ENCODE measurements at regions of chr17 and their contacts with region 1.

Region 1: GRCh38 chr17:76408052-76408849 is 23.8 kb downstream of the SPHK1 start:
- DNase-seq: peak; percentile 85
- H3K4me3 Mint-ChIP-seq: no peak overlapping the region
- H3K27ac Mint-ChIP-seq: no peak overlapping the region
- H3K4me1 Mint-ChIP-seq: peaks cover 6% of the 10 kb centered on the region
- H3K27me3 Mint-ChIP-seq: no peaks in the 10 kb centered on the region

Region 2: DNA sequence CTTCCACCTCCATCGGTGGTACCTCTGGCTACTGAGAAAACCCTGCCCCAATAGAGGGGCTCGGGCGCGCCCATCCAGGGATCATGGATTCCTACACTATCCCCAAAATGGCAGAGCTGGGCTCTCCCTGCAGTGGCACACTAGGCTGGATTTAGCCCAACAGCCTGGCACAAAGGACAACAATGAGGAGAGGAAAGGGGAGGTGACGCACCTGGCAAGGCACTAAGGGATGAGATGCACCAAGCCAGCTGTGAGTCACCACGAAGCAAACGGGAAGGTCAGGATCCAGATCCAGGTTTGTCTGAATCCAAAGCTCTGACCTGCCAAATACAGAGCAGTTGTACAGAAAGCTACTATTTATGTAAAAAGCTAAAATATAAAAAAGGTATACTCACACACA is 26.6 kb after region 1 on chr17:
- CTCF ChIA-PET with region 1: interaction called, 10 read pairs
- DNase-seq: no peak
- H3K4me3 Mint-ChIP-seq: no peak overlapping the region
- H3K27ac Mint-ChIP-seq: no peak overlapping the region
- H3K4me1 Mint-ChIP-seq: peaks cover 4% of the 10 kb centered on the region
- H3K27me3 Mint-ChIP-seq: no peaks in the 10 kb centered on the region

Region 3: GRCh38 chr17:76458580-76459490 is 50.6 kb after region 1 on chr17:
- CTCF ChIA-PET with region 1: interaction called, 14 read pairs
- DNase-seq: no peak
- H3K4me3 Mint-ChIP-seq: no peak overlapping the region
- H3K27ac Mint-ChIP-seq: no peak overlapping the region
- H3K4me1 Mint-ChIP-seq: no peaks in the 10 kb centered on the region
- H3K27me3 Mint-ChIP-seq: peaks cover 55% of the 10 kb centered on the region

Region 4: DNA sequence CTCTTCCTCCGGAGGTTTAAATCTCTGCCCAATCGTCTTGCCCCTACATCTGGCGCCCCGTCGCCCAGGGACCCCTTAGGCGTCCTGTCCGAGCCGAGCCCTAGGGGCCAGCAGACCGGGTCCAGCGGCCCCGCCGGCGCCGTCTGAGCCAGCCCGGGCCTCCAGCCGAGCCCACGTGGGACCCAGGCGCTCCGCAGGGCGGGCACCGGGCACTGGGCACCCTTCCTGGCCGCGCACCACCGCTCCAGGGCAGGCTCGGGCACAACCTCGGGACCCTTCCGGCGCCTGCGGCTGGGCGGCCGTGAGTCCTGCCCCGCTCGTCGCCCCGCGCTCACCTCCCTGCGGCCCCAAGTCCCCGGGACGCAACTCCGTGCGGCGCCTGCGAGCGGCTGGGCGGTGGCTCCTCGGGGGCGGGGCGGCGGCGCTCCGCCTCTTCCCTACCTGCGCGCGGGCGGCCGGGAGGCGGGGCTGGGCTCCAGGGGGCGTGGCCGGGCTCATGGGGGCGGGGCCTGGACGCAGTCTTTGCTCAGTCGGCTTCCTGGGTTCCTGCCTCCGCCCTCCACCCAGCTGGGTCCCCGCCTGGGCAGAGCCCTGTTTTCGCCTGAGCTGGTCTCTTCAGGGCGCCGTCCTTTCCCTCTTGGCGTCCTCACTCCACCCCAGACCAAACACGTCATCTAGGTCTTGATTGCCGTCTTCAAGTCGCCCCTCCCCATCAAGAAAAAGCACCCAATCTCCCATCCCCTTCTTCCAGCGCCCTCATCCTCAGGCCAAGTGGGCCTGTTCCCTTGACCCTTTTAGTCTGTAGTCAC is 93.0 kb after region 1 on chr17 and contains the start of gene RHBDF2:
- CTCF ChIA-PET with region 1: interaction called, 17 read pairs
- DNase-seq: peak; percentile 97
- H3K4me3 Mint-ChIP-seq: peak within 1 kb of the TSS; percentile 84
- H3K27ac Mint-ChIP-seq: peak within 1 kb of the TSS; percentile 93
- H3K4me1 Mint-ChIP-seq: peaks cover 65% of the 10 kb centered on the region
- H3K27me3 Mint-ChIP-seq: peaks cover 7% of the 10 kb centered on the region

Measured in activated naive CD4-positive, alpha-beta T cell treated with anti-CD3 and anti-CD28 coated beads, Interleukin-2, amount 10 ng/mL, durations not matched to agents 7 days and 5 days (primary cell).